HepG2 (cell line): ENCODE measurements at regions of chr15 and their contacts with region 1.

Region 1: DNA sequence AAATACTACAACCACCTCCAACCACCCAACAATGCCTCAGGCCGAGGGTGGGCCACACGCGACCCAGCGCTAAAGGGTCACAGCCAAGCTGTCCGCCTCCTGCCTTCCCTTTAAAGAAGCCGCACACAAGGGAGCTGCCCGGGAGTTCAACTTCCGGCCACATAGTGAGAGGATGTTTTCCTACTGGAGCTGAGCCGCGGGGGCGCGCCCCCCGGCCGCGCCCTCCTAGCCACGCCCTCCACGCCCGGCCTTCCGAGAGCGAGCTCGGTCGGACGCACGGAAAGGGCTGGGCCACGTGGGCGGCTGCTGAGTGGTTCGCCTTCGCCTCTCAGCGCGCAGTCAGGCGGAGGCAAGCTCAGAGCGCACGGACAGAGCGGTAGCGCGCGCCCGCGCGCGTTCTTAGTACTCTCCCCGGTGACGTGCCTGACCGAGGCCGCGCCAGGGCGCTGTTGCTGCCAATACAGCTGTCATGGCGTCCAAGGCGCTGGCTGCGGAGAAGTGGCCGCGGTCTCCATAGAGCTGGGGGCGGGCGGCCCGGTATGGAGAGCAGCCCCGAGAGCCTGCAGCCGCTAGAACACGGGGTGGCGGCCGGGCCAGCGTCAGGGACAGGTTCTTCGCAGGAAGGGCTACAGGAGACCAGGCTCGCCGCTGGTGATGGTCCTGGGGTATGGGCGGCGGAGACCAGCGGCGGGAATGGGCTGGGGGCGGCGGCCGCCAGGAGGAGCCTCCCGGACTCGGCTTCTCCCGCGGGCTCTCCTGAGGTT is at the start of gene MINDY2:
- DNase-seq: peak; percentile 96
- ATAC-seq: peak; percentile 96
- H3K4me3 ChIP-seq: peak within 1 kb of the TSS; percentile 81 to 94 (median 94)
- H3K27ac ChIP-seq: peak within 1 kb of the TSS; percentile 89
- H3K4me1 ChIP-seq: peaks cover 40% of the 10 kb centered on the region
- H3K27me3 ChIP-seq: no peaks in the 10 kb centered on the region; a peak in 1 of 5 replicates
- CTCF ChIP-seq: peak; percentile 74
- EP300 ChIP-seq: peak in 1 of 2 experiments; percentile 41; a peak in 1 of 4 replicates
- POLR2A ChIP-seq: peak; percentile 81 to 83; a peak in 3 of 4 replicates
- RAD21 ChIP-seq: no peak; the same call in 1 of the 2 replicates
- total RNA-seq, gene MINDY2: 12.6 and 15.6 TPM in 2 replicates

Region 2: GRCh38 chr15:58227706-58228543 is 543.1 kb before region 1 on chr15:
- CTCF ChIA-PET with region 1: no interaction called
- POLR2A ChIA-PET with region 1: interaction called, 5 read pairs
- in situ Hi-C with region 1: no loop called
- intact Hi-C with region 1: loop called (anchors 5 kb)
- DNase-seq: peak; percentile 62
- ATAC-seq: peak; percentile 65
- H3K4me3 ChIP-seq: no peak overlapping the region
- H3K27ac ChIP-seq: no peak overlapping the region
- H3K4me1 ChIP-seq: peaks cover 18% of the 10 kb centered on the region; the same call in 1 of the 2 replicates
- H3K27me3 ChIP-seq: no peaks in the 10 kb centered on the region
- CTCF ChIP-seq: peak; percentile 84
- EP300 ChIP-seq: no peak
- POLR2A ChIP-seq: no peak
- RAD21 ChIP-seq: peak; percentile 83; the same call in 1 of the 2 replicates

Region 3: DNA sequence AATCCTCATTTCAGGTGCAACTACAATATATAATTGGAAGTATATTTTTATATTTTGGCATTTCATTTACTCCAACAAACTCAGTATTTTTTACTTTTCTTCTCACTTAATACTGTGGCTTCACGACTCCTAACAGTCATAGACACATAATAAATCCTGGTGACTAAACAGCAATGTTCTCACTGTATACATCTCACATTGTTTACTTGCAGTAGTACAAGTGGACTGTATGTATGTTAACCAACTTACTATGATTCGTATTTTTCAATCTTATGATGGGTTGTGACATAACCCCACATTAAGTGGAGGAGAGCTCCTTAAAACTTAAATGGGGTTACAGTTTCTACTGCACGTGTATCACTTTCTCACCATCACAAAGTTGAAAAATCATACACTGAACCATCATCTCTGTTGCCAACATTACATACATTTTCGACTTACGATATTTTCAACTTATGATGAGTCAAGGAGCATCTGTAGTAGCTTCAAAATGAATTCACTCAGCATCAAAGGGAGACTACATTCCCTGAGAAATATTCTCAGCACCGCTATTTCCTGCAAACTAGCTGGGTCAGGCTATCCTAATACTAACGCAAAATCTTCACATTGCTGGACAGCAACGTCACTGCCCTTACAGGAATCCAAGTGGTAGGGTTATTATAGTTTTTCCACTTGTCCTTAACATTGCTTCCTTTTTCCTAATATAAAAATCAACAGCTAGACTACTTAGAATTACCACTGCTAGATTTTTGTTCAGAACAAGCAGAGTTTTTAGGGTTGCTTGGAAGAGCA is 28.8 kb before region 1 on chr15:
- CTCF ChIA-PET with region 1: no interaction called
- POLR2A ChIA-PET with region 1: interaction called, 15 read pairs
- in situ Hi-C with region 1: no loop called
- intact Hi-C with region 1: no loop called
- DNase-seq: no peak
- ATAC-seq: peak; percentile 56
- H3K4me3 ChIP-seq: peak overlapping the region in 2 of 3 experiments; percentile 6 to 14; a peak in 1 of 6 replicates
- H3K27ac ChIP-seq: peak overlapping the region; percentile 73
- H3K4me1 ChIP-seq: peaks cover 92% of the 10 kb centered on the region
- H3K27me3 ChIP-seq: no peaks in the 10 kb centered on the region
- CTCF ChIP-seq: no peak
- EP300 ChIP-seq: no peak
- POLR2A ChIP-seq: no peak
- RAD21 ChIP-seq: no peak

Region 4: DNA sequence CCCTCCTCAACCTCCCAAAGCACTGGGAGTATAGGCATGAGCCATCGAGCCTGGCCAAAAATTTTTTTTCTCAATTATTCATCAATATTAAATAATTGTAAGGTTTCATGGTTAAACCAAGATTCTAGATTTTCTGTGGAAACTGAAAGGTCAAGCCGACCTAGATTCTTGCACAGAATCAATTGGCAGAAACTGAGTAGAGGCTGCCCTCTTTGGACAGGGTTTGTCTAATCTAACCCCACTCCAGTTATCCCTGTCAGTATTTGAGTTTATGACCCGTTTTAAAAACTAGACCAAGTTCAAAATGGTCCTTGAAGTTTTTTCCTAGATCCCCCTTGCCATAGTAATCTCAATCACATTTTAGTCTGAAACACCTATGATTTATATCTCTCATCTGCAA is 12.9 kb before region 1 on chr15:
- CTCF ChIA-PET with region 1: no interaction called
- POLR2A ChIA-PET with region 1: interaction called, 14 read pairs
- in situ Hi-C with region 1: no loop called
- intact Hi-C with region 1: no loop called
- DNase-seq: no peak
- ATAC-seq: peak; percentile 69
- H3K4me3 ChIP-seq: no peak overlapping the region
- H3K27ac ChIP-seq: no peak overlapping the region
- H3K4me1 ChIP-seq: peaks cover 10% of the 10 kb centered on the region; the same call in 1 of the 2 replicates
- H3K27me3 ChIP-seq: no peaks in the 10 kb centered on the region
- CTCF ChIP-seq: peak; percentile 60
- EP300 ChIP-seq: no peak
- POLR2A ChIP-seq: no peak
- RAD21 ChIP-seq: no peak

Region 5: DNA sequence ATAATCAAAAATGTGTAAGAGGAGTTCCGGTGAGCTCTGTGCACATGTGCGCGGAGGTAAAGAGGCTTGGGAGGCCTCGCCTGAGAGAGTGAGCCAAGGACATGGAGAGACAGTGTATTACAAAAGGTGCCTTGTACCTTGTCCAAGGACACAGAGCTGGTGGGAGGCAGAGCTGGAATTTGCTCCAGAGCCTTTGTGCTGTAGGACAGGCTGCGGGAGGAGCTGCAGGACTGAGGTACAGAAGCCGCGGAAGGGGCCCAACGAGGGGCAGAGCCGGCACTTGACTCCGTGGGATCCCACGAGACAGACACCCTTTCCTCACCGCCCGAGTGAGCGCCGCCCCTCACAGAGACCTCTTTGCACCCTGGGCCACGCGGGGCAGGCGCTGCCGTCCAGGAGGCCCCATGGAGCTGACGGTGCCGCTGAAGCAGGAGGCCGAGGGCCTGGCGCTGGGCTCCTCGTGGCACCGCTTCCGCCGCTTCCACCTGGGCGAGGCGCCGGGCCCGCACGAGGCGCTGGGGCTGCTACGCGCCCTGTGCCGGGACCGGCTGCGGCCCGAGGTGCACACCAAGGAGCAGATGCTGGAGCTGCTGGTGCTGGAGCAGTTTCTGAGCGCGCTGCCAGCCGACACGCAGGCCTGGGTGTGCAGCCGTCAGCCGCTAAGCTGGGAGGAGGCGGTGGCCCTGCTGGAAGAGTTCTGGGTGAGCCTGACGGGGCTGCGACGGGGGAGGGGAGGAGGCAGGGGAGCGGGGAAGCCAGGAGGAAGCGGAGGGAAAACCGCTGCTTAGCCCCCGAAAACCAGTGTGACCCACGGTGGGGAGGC is 93.8 kb after region 1 on chr15:
- CTCF ChIA-PET with region 1: no interaction called
- POLR2A ChIA-PET with region 1: interaction called, 67 read pairs
- in situ Hi-C with region 1: no loop called
- intact Hi-C with region 1: no loop called
- DNase-seq: peak; percentile 95
- ATAC-seq: peak; percentile 89
- H3K4me3 ChIP-seq: peak overlapping the region; percentile 80 to 86 (median 82); a peak in 5 of 6 replicates
- H3K27ac ChIP-seq: peak overlapping the region; percentile 98
- H3K4me1 ChIP-seq: peaks cover 34% of the 10 kb centered on the region
- H3K27me3 ChIP-seq: no peaks in the 10 kb centered on the region; a peak in 1 of 5 replicates
- CTCF ChIP-seq: peak; percentile 63
- EP300 ChIP-seq: peak; percentile 43 to 66; a peak in 2 of 4 replicates
- POLR2A ChIP-seq: peak; percentile 81 to 94
- RAD21 ChIP-seq: peak; percentile 71